Posterior cingulate gyrus (tissue), 11 donors: ENCODE measurements at regions of chr17 and their contacts with region 1.

Region 1: GRCh38 chr17:1331708-1332107 is 52.2 kb downstream of the TRARG1 start:
- DNase-seq: no peak

Region 2: DNA sequence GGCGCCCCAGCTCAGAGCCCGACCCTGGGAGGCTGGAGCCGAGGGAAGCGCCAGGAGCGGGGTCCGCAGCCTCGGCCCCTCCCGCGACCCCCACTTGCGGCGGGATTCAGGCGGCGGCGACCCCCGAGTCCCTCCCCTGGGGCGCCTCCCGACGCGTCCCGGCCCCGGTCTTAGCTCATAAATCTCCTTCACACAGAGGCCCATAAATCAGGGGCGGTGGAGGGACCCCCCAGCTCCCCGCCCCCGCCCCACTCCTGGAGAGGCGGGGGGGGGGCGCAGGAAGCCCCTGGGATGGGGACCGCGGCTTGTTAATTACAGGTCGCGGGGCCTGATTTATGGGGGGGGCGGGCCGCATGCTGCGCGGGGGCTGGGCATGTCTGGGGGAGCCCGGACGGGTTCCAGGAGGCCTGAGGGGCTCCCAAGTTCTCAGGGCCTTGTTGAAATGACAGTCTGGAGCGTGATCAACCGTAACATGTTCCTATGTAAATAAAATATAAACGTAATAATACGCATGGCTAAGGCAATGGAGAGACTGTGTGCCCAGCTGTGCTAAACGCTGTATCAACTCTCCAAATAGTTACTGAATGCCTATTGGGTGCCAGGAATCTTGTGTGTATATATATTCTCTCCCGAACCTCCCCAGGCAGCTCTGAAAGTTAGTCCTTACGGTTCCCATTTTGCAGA is 71.5 kb before region 1 on chr17:
- intact Hi-C with region 1: loop called (anchors 1 kb)
- DNase-seq: no peak

Region 3: GRCh38 chr17:1275962-1276736 is 55.6 kb before region 1 on chr17:
- intact Hi-C with region 1: loop called (anchors 2 kb)
- DNase-seq: peak in 8 of 10 donors; percentile 48 to 91 (median 66)

Region 4: GRCh38 chr17:1474402-1475189 is 142.9 kb after region 1 on chr17:
- intact Hi-C with region 1: no loop called
- DNase-seq: peak in 1 of 10 donors; percentile 85